ENCODE measurements at regions of chr13 and their contacts with region 1.

Region 1: GRCh38 chr13:26929971-26930730 is 169.6 kb upstream of the GPR12 start:
- DNase-seq: no peak
- ATAC-seq: peak; percentile 90
- H3K4me3 ChIP-seq: no peak overlapping the region
- H3K27ac ChIP-seq: no peak overlapping the region
- H3K4me1 ChIP-seq: no peaks in the 10 kb centered on the region
- H3K27me3 ChIP-seq: peaks cover 2 to 3% of the 10 kb centered on the region in 2 experiments; a peak in 3 of 4 replicates
- CTCF ChIP-seq: peak; percentile 85 to 92 (median 88)
- EP300 ChIP-seq: no peak
- POLR2A ChIP-seq: no peak
- RAD21 ChIP-seq: peak; percentile 66

Region 2: GRCh38 chr13:26707122-26708006 is 222.8 kb before region 1 on chr13:
- CTCF ChIA-PET with region 1: interaction called, 4 read pairs
- POLR2A ChIA-PET with region 1: no interaction called
- RAD21 ChIA-PET with region 1: no interaction called
- SMC1A ChIA-PET with region 1: no interaction called
- in situ Hi-C with region 1: no loop called
- intact Hi-C with region 1: loop called (anchors 5 kb)
- DNase-seq: no peak
- ATAC-seq: peak; percentile 76
- H3K4me3 ChIP-seq: no peak overlapping the region
- H3K27ac ChIP-seq: no peak overlapping the region
- H3K4me1 ChIP-seq: no peaks in the 10 kb centered on the region
- H3K27me3 ChIP-seq: no peaks in the 10 kb centered on the region
- CTCF ChIP-seq: peak; percentile 50 to 54 (median 53)
- EP300 ChIP-seq: no peak
- POLR2A ChIP-seq: no peak
- RAD21 ChIP-seq: peak; percentile 64

Region 3: DNA sequence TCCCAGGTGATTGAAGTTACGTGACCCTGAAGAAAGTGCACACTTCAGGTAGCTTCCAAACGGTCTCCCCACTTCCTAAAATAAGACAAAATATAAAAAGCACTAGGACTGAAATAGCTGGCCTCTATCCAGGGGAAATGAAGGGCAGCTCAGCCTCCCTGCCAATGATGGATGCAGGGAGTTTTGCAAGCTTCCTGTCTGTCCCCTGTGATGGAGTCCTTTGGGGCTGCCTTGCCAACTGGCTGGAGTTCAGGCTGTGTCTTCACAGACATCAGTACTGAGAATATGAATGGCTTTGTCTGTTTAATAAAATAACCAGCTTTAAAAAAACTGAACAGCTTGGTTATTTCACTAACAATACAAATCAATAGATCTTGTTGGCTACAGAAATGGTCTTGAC is 68.2 kb before region 1 on chr13:
- CTCF ChIA-PET with region 1: no interaction called
- POLR2A ChIA-PET with region 1: no interaction called
- RAD21 ChIA-PET with region 1: no interaction called
- SMC1A ChIA-PET with region 1: no interaction called
- in situ Hi-C with region 1: no loop called
- intact Hi-C with region 1: no loop called
- DNase-seq: no peak
- ATAC-seq: no peak
- H3K4me3 ChIP-seq: no peak overlapping the region
- H3K27ac ChIP-seq: no peak overlapping the region
- H3K4me1 ChIP-seq: no peaks in the 10 kb centered on the region
- H3K27me3 ChIP-seq: no peaks in the 10 kb centered on the region
- CTCF ChIP-seq: no peak
- EP300 ChIP-seq: no peak
- POLR2A ChIP-seq: no peak
- RAD21 ChIP-seq: no peak

Region 4: DNA sequence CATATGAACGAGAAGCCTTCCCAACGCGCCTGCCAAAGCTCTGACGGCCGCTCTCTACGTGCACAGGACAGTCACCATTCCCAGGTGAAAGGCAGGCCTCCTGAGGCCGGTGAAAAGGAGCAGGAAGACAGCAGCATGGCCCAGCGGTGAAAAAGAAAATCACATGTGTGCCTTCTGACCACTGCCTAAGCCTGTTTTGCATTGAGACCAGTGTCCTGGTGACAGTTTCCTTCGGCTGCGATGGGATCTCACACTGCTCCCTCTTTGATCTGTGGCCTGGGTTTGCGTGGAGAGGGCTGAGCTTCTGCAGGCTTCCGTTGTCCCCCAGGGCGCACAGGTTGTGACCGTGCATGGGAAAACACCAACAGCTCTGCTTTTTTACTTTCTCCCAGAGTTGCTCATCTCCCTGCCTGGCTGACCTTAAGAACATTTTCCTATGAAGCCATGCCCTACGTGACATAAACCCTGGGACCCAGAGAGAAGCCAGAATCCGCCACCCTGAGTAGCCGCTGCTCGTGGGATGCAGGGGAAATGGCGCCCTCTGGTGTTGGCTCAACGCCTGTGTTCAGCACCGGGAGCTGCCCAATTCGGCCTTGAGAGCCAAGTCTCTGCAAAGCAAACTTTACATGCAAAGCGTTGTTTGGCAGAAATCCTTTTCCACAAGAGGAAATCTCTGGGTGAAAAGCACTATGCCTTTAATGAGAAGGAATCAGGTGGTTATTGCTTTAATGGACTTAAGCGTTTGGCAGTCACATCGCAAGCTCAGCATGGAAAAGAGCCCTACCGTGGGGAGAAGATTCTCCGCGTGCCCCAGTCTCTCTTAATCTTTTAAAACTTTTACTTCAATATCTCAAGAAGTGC is 57.4 kb before region 1 on chr13:
- CTCF ChIA-PET with region 1: interaction called, 10 read pairs
- POLR2A ChIA-PET with region 1: no interaction called
- RAD21 ChIA-PET with region 1: no interaction called
- SMC1A ChIA-PET with region 1: interaction called, 6 read pairs
- in situ Hi-C with region 1: no loop called
- intact Hi-C with region 1: no loop called
- DNase-seq: no peak
- ATAC-seq: peak; percentile 86
- H3K4me3 ChIP-seq: no peak overlapping the region
- H3K27ac ChIP-seq: no peak overlapping the region
- H3K4me1 ChIP-seq: no peaks in the 10 kb centered on the region
- H3K27me3 ChIP-seq: no peaks in the 10 kb centered on the region; a peak in 1 of 4 replicates
- CTCF ChIP-seq: peak; percentile 65 to 84 (median 80)
- EP300 ChIP-seq: no peak
- POLR2A ChIP-seq: no peak
- RAD21 ChIP-seq: peak; percentile 45

Region 5: GRCh38 chr13:26914624-26915023 is 15.5 kb before region 1 on chr13:
- CTCF ChIA-PET with region 1: interaction called, 19 read pairs
- POLR2A ChIA-PET with region 1: interaction called, 3 read pairs
- RAD21 ChIA-PET with region 1: no interaction called
- SMC1A ChIA-PET with region 1: interaction called, 3 read pairs
- in situ Hi-C with region 1: no loop called
- intact Hi-C with region 1: no loop called
- DNase-seq: peak; percentile 9
- ATAC-seq: peak; percentile 74
- H3K4me3 ChIP-seq: no peak overlapping the region
- H3K27ac ChIP-seq: no peak overlapping the region
- H3K4me1 ChIP-seq: no peaks in the 10 kb centered on the region
- H3K27me3 ChIP-seq: no peaks in the 10 kb centered on the region; a peak in 3 of 4 replicates
- CTCF ChIP-seq: no peak
- EP300 ChIP-seq: no peak
- POLR2A ChIP-seq: no peak
- RAD21 ChIP-seq: no peak

Region 6: DNA sequence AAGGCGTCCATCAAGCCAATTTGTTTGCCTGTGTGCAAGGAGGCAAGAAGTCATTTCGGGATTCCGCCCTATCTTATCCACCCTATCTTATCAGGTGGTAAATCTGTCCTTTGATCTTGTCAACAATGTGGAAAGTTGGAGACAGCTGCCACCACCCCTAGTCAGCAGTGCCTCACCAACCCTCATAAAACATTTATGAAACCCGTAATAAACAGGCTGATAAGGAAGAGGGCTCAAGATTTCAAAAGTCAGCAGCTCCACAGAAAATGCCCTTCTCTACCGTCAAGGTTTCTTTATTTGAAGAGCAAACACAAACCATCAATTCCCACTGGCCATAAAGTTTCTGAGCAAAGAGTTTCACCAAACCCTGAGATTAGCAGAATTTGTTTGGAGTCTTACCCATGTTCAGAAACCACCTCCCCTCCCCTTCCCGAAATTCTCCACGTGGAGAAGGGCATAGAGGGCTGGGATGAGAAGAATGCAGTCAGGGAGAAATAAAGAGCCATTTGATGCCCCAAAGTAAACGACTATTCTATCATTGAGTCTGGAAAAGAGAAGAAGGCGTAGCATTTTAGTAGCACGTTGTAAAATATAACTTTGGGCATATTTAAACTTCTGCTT is 26.5 kb after region 1 on chr13:
- CTCF ChIA-PET with region 1: no interaction called
- POLR2A ChIA-PET with region 1: no interaction called
- RAD21 ChIA-PET with region 1: no interaction called
- SMC1A ChIA-PET with region 1: no interaction called
- in situ Hi-C with region 1: no loop called
- intact Hi-C with region 1: no loop called
- DNase-seq: no peak
- ATAC-seq: no peak
- H3K4me3 ChIP-seq: no peak overlapping the region
- H3K27ac ChIP-seq: no peak overlapping the region
- H3K4me1 ChIP-seq: no peaks in the 10 kb centered on the region
- H3K27me3 ChIP-seq: no peaks in the 10 kb centered on the region; a peak in 2 of 4 replicates
- CTCF ChIP-seq: no peak
- EP300 ChIP-seq: no peak
- POLR2A ChIP-seq: no peak
- RAD21 ChIP-seq: no peak